Heart right ventricle (tissue), 16 donors: ENCODE measurements at regions of chr11 and their contacts with region 1.

Region 1: GRCh38 chr11:27698872-27699474 is 1.3 kb downstream of the BDNF start:
- DNase-seq: peak; percentile 77 to 78
- ATAC-seq: peak; percentile 80 to 95 (median 92)
- H3K4me3 ChIP-seq: peak overlapping the region; percentile 40 to 68 (median 61)
- H3K27ac ChIP-seq: peak overlapping the region in 7 of 10 donors; percentile 18 to 87 (median 75)
- H3K4me1 ChIP-seq: peaks cover 0 to 32% (median 21%) of the 10 kb centered on the region in 9 donors
- H3K27me3 ChIP-seq: peaks cover 3 to 90% (median 53%) of the 10 kb centered on the region in 7 donors
- CTCF ChIP-seq: peak; percentile 57 to 84 (median 76)

Region 2: DNA sequence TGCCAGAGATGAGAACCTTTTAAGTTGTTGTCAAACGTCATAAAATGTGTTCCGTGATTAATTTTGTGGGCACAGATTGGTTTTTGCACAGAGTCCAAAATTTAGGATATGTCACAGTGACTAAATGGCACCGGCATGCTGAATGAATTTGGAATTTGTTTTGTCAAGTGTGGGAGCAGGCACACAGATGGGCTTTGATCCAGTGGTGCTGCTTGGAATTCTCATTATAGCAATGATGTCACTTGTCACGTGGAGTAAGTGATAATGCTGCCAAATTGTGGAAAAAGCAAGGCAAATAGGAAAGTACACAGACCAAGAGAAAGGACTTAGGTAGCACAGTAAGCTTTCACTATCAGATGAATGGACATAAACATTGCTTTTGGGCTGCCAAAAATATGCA is 184.4 kb before region 1 on chr11:
- intact Hi-C with region 1: loop called in 1 of 10 experiments (anchors 5 kb)
- DNase-seq: peak in 1 of 2 donors; percentile 60
- ATAC-seq: peak; percentile 76 to 91 (median 90)
- H3K4me3 ChIP-seq: no peak overlapping the region
- H3K27ac ChIP-seq: peak overlapping the region; percentile 50 to 80 (median 69)
- H3K4me1 ChIP-seq: peaks cover 0 to 44% (median 10%) of the 10 kb centered on the region in 9 donors
- H3K27me3 ChIP-seq: no peaks in the 10 kb centered on the region
- CTCF ChIP-seq: no peak

Region 3: GRCh38 chr11:27532652-27533325 is 166.2 kb before region 1 on chr11:
- intact Hi-C with region 1: loop called in 2 of 10 experiments (anchors 5 to 10 kb)
- DNase-seq: no peak
- ATAC-seq: peak in 1 of 8 donors; percentile 13
- H3K4me3 ChIP-seq: no peak overlapping the region
- H3K27ac ChIP-seq: no peak overlapping the region
- H3K4me1 ChIP-seq: no peaks in the 10 kb centered on the region
- H3K27me3 ChIP-seq: no peaks in the 10 kb centered on the region
- CTCF ChIP-seq: no peak

Region 4: GRCh38 chr11:27649800-27650199 is 49.2 kb before region 1 on chr11:
- intact Hi-C with region 1: loop called in 2 of 10 experiments (anchors 5 kb)
- DNase-seq: no peak
- ATAC-seq: no peak
- H3K4me3 ChIP-seq: no peak overlapping the region
- H3K27ac ChIP-seq: no peak overlapping the region
- H3K4me1 ChIP-seq: peaks cover 0 to 15% (median 0%) of the 10 kb centered on the region in 9 donors
- H3K27me3 ChIP-seq: no peaks in the 10 kb centered on the region
- CTCF ChIP-seq: no peak

Region 5: DNA sequence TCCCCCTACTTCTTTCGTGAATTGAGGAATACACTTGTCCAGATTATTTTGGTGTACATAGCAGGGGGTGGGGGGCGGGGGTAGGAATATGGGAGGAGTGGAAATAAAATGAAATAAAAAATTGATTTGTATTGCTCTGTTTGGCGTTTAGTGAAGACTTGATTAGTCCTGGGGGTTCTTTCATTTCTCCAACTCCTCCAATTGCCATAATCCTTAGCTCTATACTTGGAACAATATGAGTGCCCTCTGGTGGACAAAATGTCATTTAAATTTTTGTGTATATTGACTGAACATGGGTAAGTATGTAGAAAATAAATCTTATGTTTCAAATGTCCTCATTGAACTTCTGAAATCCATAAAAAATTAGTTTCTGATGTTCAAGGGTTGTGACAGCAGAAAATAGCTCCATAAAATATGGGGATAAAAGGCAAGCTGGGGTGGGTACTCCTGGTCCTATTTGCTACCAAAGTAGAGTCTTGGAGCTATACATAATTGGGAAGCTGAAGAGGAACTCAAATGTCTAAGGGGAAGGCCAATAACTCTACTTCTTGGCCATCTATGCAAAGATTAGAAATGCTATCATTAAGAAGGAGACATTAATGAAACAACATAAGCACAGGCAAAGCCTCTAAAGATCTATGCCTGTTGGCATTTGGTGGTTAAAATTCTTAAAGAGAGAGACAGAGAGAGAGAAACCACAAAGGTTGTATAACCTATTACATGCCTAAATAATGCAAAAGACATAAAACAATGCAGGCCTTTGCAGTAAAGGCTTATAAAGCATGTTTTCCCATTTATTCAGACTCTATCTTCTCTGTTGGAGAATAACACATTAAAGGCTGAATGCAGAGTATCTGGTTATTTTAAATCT is 830.8 kb after region 1 on chr11:
- intact Hi-C with region 1: loop called (anchors 2 to 10 kb)
- DNase-seq: no peak
- ATAC-seq: no peak
- H3K4me3 ChIP-seq: no peak overlapping the region
- H3K27ac ChIP-seq: no peak overlapping the region
- H3K4me1 ChIP-seq: no peaks in the 10 kb centered on the region
- H3K27me3 ChIP-seq: no peaks in the 10 kb centered on the region
- CTCF ChIP-seq: peak; percentile 16 to 64 (median 49)

Region 6: GRCh38 chr11:29328961-29329441 is 1630.0 kb after region 1 on chr11:
- intact Hi-C with region 1: loop called in 6 of 10 experiments (anchors 5 to 10 kb)
- DNase-seq: no peak
- ATAC-seq: peak in 1 of 8 donors; percentile 27
- H3K4me3 ChIP-seq: no peak overlapping the region
- H3K27ac ChIP-seq: no peak overlapping the region
- H3K4me1 ChIP-seq: no peaks in the 10 kb centered on the region
- H3K27me3 ChIP-seq: peaks cover 0 to 2% (median 0%) of the 10 kb centered on the region in 7 donors
- CTCF ChIP-seq: peak in 7 of 9 donors; percentile 23 to 48 (median 33)